ENCODE measurements at regions of chr10 and their contacts with region 1.

Region 1: GRCh38 chr10:73159038-73159648 is 8.7 kb downstream of the ECD start:
- H3K4me3 ChIP-seq: no peak overlapping the region
- H3K27ac ChIP-seq: no peak overlapping the region
- H3K4me1 ChIP-seq: no peaks in the 10 kb centered on the region
- CTCF ChIP-seq: 0 out of 2 replicates have a peak, but pooled peaks have one; percentile 42

Region 2: DNA sequence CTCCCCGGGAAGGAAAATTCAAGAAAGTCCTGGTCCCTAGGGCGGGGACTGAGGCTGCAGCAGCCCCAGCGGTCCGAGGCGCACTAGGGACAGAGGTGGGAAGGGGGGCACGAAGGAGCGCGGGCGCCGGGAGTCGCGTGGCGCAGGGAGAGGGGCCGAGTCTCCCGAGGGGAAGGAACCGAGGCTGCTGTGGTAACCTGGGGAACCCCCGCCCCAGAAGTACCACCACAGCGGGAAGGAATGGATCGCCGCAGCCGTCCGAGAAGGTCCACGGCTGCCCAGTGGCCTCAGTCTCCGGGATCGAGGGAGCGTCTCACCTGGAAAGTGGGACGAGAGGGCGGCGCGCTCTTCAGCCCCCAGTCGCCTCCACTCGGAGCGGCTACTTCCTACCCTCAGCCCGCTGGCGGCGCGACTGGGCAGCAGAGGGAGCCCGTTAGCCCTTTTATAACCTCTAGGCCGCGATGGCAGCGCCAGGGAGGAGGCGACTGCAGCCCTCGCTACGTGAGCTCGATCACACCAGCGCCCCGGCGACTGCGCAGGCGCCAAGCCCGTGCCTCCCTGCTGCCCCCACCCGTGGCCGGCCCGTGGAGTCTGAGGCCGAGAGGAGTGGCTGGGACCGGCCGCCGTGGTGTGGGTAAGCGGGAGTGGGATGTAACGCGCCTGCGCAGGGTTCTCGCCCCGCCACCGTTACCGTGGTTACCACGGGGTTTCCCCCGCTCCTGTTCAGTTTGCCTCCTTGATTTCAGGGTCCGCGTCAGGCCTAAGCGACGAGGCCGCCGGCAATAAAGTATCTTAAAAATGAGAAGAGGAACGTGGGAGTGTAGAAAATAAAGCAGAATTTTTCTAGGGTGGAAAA is 62.5 kb before region 1 on chr10 and contains the start of gene P4HA1:
- CTCF ChIA-PET with region 1: interaction called, 40 read pairs
- POLR2A ChIA-PET with region 1: interaction called, 4 read pairs
- H3K4me3 ChIP-seq: peak within 1 kb of the TSS; percentile 82
- H3K27ac ChIP-seq: peak within 1 kb of the TSS; percentile 90
- H3K4me1 ChIP-seq: no peaks in the 10 kb centered on the region; the same call in 1 of the 2 replicates
- CTCF ChIP-seq: peak; percentile 99

Region 3: GRCh38 chr10:73136627-73137026 is 22.5 kb before region 1 on chr10:
- CTCF ChIA-PET with region 1: interaction called, 12 read pairs
- POLR2A ChIA-PET with region 1: interaction called, 3 read pairs
- H3K4me3 ChIP-seq: no peak overlapping the region
- H3K27ac ChIP-seq: no peak overlapping the region
- H3K4me1 ChIP-seq: 0 out of 2 replicates have a peak, but pooled peaks cover 1% of the 10 kb centered on the region
- CTCF ChIP-seq: no peak

Measured in HEK293 (cell line).